ENCODE measurements at regions of chr3 and their contacts with region 1.

Region 1: GRCh38 chr3:38738630-38739395 is 77.2 kb downstream of the SCN10A start:
- DNase-seq: peak; percentile 72
- H3K4me3 Mint-ChIP-seq: no peak overlapping the region
- H3K27ac Mint-ChIP-seq: no peak overlapping the region
- H3K4me1 Mint-ChIP-seq: no peaks in the 10 kb centered on the region
- H3K27me3 Mint-ChIP-seq: peaks cover 71% of the 10 kb centered on the region
- CTCF ChIP-seq: peak; percentile 51

Region 2: GRCh38 chr3:38843898-38844297 is 105.1 kb after region 1 on chr3:
- CTCF ChIA-PET with region 1: interaction called, 13 read pairs
- intact Hi-C with region 1: loop called (anchors 1 kb)
- DNase-seq: peak; percentile 37
- H3K4me3 Mint-ChIP-seq: no peak overlapping the region
- H3K27ac Mint-ChIP-seq: no peak overlapping the region
- H3K4me1 Mint-ChIP-seq: no peaks in the 10 kb centered on the region
- H3K27me3 Mint-ChIP-seq: peaks cover 43% of the 10 kb centered on the region
- CTCF ChIP-seq: peak; percentile 23

Region 3: DNA sequence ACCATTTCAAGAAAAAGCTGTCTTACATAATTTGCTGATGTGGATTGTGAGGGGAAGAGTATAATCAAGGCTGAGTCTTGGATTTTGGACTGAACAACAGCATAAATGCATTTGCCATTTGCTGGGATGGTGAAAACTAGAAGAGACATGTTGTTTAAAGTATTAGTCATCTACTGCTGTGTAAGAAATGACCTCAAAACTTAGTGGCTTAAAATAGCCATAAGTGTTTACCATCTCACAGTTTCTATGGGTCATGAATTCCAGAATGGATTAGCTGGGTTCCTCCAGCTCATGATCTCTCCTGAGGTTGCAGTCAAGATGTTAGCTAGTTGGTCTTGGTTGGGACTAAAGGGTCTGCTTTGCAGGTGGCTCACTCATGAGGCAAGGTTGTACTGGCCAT is 246.8 kb after region 1 on chr3:
- CTCF ChIA-PET with region 1: no interaction called
- intact Hi-C with region 1: no loop called
- DNase-seq: no peak
- H3K4me3 Mint-ChIP-seq: no peak overlapping the region
- H3K27ac Mint-ChIP-seq: no peak overlapping the region
- H3K4me1 Mint-ChIP-seq: no peaks in the 10 kb centered on the region
- H3K27me3 Mint-ChIP-seq: peaks cover 30% of the 10 kb centered on the region
- CTCF ChIP-seq: no peak

Region 4: GRCh38 chr3:39025222-39025970 is 286.6 kb after region 1 on chr3:
- CTCF ChIA-PET with region 1: no interaction called
- intact Hi-C with region 1: loop called (anchors 2 kb)
- DNase-seq: no peak
- H3K4me3 Mint-ChIP-seq: no peak overlapping the region
- H3K27ac Mint-ChIP-seq: no peak overlapping the region
- H3K4me1 Mint-ChIP-seq: no peaks in the 10 kb centered on the region
- H3K27me3 Mint-ChIP-seq: peaks cover 31% of the 10 kb centered on the region
- CTCF ChIP-seq: no peak